ENCODE measurements at regions of chr18 and their contacts with region 1.

Region 1: GRCh38 chr18:69947361-69948133 is at the start of gene CD226:
- DNase-seq: peak; percentile 60
- H3K4me3 Mint-ChIP-seq: no peak within 1 kb of the TSS
- H3K27ac Mint-ChIP-seq: no peak within 1 kb of the TSS
- H3K4me1 Mint-ChIP-seq: peaks cover 43% of the 10 kb centered on the region
- H3K27me3 Mint-ChIP-seq: no peaks in the 10 kb centered on the region
- total RNA-seq, gene CD226: 113 to 126 TPM

Region 2: GRCh38 chr18:69935319-69936190 is 12.0 kb before region 1 on chr18:
- CTCF ChIA-PET with region 1: interaction called, 16 read pairs
- POLR2A ChIA-PET with region 1: interaction called, 3 read pairs
- DNase-seq: peak; percentile 88
- H3K4me3 Mint-ChIP-seq: no peak overlapping the region
- H3K27ac Mint-ChIP-seq: no peak overlapping the region
- H3K4me1 Mint-ChIP-seq: peaks cover 15% of the 10 kb centered on the region
- H3K27me3 Mint-ChIP-seq: no peaks in the 10 kb centered on the region

Region 3: DNA sequence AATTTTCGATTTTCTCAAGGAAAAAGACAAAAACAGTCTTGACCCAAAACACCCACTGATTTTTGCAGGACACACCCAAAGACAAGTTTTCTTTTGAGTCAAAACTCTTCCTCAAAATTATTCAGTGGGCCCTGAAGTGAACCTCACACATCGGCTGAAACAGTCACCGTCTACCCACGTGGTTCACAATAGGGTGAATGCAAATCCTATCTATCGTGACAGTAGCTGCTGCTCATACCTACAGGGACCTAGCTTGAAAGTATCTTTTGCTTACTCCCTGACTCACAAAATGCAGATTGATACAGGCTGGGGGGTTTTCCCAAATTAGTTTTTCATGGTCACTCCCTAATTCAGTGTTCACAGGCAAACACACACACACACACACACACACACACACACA is 10.9 kb after region 1 on chr18:
- CTCF ChIA-PET with region 1: interaction called, 4 read pairs
- POLR2A ChIA-PET with region 1: interaction called, 14 read pairs
- DNase-seq: no peak
- H3K4me3 Mint-ChIP-seq: no peak overlapping the region
- H3K27ac Mint-ChIP-seq: no peak overlapping the region
- H3K4me1 Mint-ChIP-seq: peaks cover 12% of the 10 kb centered on the region
- H3K27me3 Mint-ChIP-seq: no peaks in the 10 kb centered on the region

Region 4: DNA sequence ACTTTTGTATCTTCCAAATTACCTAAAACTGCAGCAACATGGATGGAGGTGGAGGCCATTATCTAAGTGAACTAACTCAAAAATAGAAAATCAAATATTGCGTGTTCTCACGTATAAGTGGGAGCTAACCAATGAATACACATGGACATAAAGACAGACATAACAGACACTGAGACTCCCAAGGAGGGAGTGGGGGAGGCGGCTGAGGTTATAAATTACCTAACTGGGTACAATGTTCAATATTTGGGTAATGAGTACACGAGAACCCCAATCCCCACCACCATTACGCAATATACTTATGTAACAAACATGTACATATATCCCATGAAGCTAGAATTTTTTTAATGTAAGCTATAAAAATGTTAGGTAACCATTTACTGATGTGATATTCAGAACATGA is 138.1 kb after region 1 on chr18:
- CTCF ChIA-PET with region 1: no interaction called
- POLR2A ChIA-PET with region 1: no interaction called
- DNase-seq: no peak
- H3K4me3 Mint-ChIP-seq: no peak overlapping the region
- H3K27ac Mint-ChIP-seq: no peak overlapping the region
- H3K4me1 Mint-ChIP-seq: no peaks in the 10 kb centered on the region
- H3K27me3 Mint-ChIP-seq: no peaks in the 10 kb centered on the region

Measured in activated CD4-positive, alpha-beta T cell treated with anti-CD3 and anti-CD28 coated beads, Interleukin-2, amount 10 ng/mL, durations not matched to agents 7 days and 5 days (primary cell).